ENCODE measurements at regions of chr16 and their contacts with region 1.

Region 1: GRCh38 chr16:68074850-68075555 is 10.2 kb upstream of the NFATC3 start:
- DNase-seq: peak in 11 of 14 experiments; percentile 24 to 92 (median 48)
- ATAC-seq: peak; percentile 51
- H3K4me3 ChIP-seq: no peak overlapping the region
- H3K4me3 Mint-ChIP-seq: peak overlapping the region; percentile 75
- H3K27ac ChIP-seq: peak overlapping the region in 1 of 2 donors; percentile 14
- H3K27ac Mint-ChIP-seq: peak overlapping the region; percentile 82
- H3K4me1 ChIP-seq: peaks cover 95% of the 10 kb centered on the region
- H3K4me1 Mint-ChIP-seq: peaks cover 87% of the 10 kb centered on the region
- H3K27me3 ChIP-seq: no peaks in the 10 kb centered on the region
- H3K27me3 Mint-ChIP-seq: no peaks in the 10 kb centered on the region
- CTCF ChIP-seq: no peak

Region 2: GRCh38 chr16:68064791-68065365 is 10.1 kb before region 1 on chr16:
- CTCF ChIA-PET with region 1: interaction called, 11 read pairs
- POLR2A ChIA-PET with region 1: interaction called, 39 read pairs
- intact Hi-C with region 1: no loop called
- DNase-seq: peak; percentile 55 to 82 (median 68)
- ATAC-seq: peak; percentile 83
- H3K4me3 ChIP-seq: no peak overlapping the region
- H3K4me3 Mint-ChIP-seq: peak overlapping the region; percentile 22
- H3K27ac ChIP-seq: peak overlapping the region in 1 of 2 donors; percentile 55
- H3K27ac Mint-ChIP-seq: peak overlapping the region; percentile 50
- H3K4me1 ChIP-seq: peaks cover 86% of the 10 kb centered on the region
- H3K4me1 Mint-ChIP-seq: peaks cover 84% of the 10 kb centered on the region
- H3K27me3 ChIP-seq: no peaks in the 10 kb centered on the region
- H3K27me3 Mint-ChIP-seq: no peaks in the 10 kb centered on the region
- CTCF ChIP-seq: peak; percentile 87

Region 3: GRCh38 chr16:68126395-68126794 is 51.4 kb after region 1 on chr16:
- CTCF ChIA-PET with region 1: no interaction called
- POLR2A ChIA-PET with region 1: no interaction called
- intact Hi-C with region 1: no loop called
- DNase-seq: no peak
- ATAC-seq: no peak
- H3K4me3 ChIP-seq: no peak overlapping the region
- H3K4me3 Mint-ChIP-seq: no peak overlapping the region
- H3K27ac ChIP-seq: no peak overlapping the region
- H3K27ac Mint-ChIP-seq: peak overlapping the region; percentile 56
- H3K4me1 ChIP-seq: peaks cover 37% of the 10 kb centered on the region
- H3K4me1 Mint-ChIP-seq: peaks cover 60% of the 10 kb centered on the region
- H3K27me3 ChIP-seq: no peaks in the 10 kb centered on the region
- H3K27me3 Mint-ChIP-seq: no peaks in the 10 kb centered on the region
- CTCF ChIP-seq: no peak

Region 4: GRCh38 chr16:68237243-68238028 is 162.4 kb after region 1 on chr16:
- CTCF ChIA-PET with region 1: no interaction called
- POLR2A ChIA-PET with region 1: no interaction called
- intact Hi-C with region 1: loop called in 1 of 2 experiments (anchors 10 kb)
- DNase-seq: peak; percentile 75 to 96 (median 85)
- ATAC-seq: peak; percentile 78
- H3K4me3 ChIP-seq: peak overlapping the region; percentile 66
- H3K4me3 Mint-ChIP-seq: peak overlapping the region; percentile 95
- H3K27ac ChIP-seq: no peak overlapping the region
- H3K27ac Mint-ChIP-seq: peak overlapping the region; percentile 77
- H3K4me1 ChIP-seq: peaks cover 41% of the 10 kb centered on the region
- H3K4me1 Mint-ChIP-seq: peaks cover 35% of the 10 kb centered on the region
- H3K27me3 ChIP-seq: no peaks in the 10 kb centered on the region
- H3K27me3 Mint-ChIP-seq: no peaks in the 10 kb centered on the region
- CTCF ChIP-seq: no peak

Measured in CD4-positive, alpha-beta T cell (primary cell).